ENCODE measurements at regions of chr16 and their contacts with region 1.

Region 1: DNA sequence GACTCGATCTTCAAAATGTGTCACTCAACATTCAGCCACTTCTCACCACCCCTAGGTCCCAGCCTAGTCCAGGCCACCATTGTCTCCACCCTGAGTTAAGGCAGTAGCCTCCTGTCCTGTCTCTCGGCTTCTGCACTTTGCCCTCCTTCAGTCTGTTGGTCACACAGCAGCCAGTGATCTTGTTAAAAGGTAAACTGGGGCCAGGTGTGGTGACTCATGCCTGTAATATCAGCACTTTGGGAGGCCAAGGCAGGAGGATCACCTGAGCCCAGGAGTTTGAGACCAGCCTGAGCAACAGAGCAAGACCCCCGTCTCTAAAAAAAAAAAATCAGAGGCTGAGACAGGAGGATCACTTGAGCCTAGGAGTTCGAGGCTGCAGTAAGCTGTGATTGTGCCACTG is 25.8 kb downstream of the WWP2 start:
- DNase-seq: no peak
- ATAC-seq: no peak
- H3K4me3 ChIP-seq: no peak overlapping the region
- H3K27ac ChIP-seq: no peak overlapping the region
- H3K4me1 ChIP-seq: no peaks in the 10 kb centered on the region
- H3K27me3 ChIP-seq: no peaks in the 10 kb centered on the region
- CTCF ChIP-seq: no peak
- EP300 ChIP-seq: no peak
- POLR2A ChIP-seq: no peak
- RAD21 ChIP-seq: no peak

Region 2: GRCh38 chr16:69626256-69626655 is 161.6 kb before region 1 on chr16:
- CTCF ChIA-PET with region 1: no interaction called
- POLR2A ChIA-PET with region 1: no interaction called
- RAD21 ChIA-PET with region 1: no interaction called
- SMC1A ChIA-PET with region 1: no interaction called
- in situ Hi-C with region 1: no loop called
- intact Hi-C with region 1: no loop called
- DNase-seq: no peak
- ATAC-seq: no peak
- H3K4me3 ChIP-seq: no peak overlapping the region
- H3K27ac ChIP-seq: no peak overlapping the region
- H3K4me1 ChIP-seq: no peaks in the 10 kb centered on the region
- H3K27me3 ChIP-seq: no peaks in the 10 kb centered on the region
- CTCF ChIP-seq: no peak
- EP300 ChIP-seq: no peak
- POLR2A ChIP-seq: no peak
- RAD21 ChIP-seq: no peak

Region 3: GRCh38 chr16:69709456-69710084 is 78.3 kb before region 1 on chr16:
- CTCF ChIA-PET with region 1: no interaction called
- POLR2A ChIA-PET with region 1: no interaction called
- RAD21 ChIA-PET with region 1: no interaction called
- SMC1A ChIA-PET with region 1: no interaction called
- in situ Hi-C with region 1: no loop called
- intact Hi-C with region 1: no loop called
- DNase-seq: peak; percentile 15
- ATAC-seq: peak; percentile 83
- H3K4me3 ChIP-seq: no peak overlapping the region
- H3K27ac ChIP-seq: no peak overlapping the region
- H3K4me1 ChIP-seq: no peaks in the 10 kb centered on the region
- H3K27me3 ChIP-seq: no peaks in the 10 kb centered on the region
- CTCF ChIP-seq: peak; percentile 43 to 74 (median 64); a peak in 5 of 6 replicates
- EP300 ChIP-seq: no peak
- POLR2A ChIP-seq: no peak
- RAD21 ChIP-seq: peak; percentile 73

Region 4: GRCh38 chr16:69732101-69732500 is 55.8 kb before region 1 on chr16:
- CTCF ChIA-PET with region 1: no interaction called
- POLR2A ChIA-PET with region 1: no interaction called
- RAD21 ChIA-PET with region 1: no interaction called
- SMC1A ChIA-PET with region 1: no interaction called
- in situ Hi-C with region 1: no loop called
- intact Hi-C with region 1: no loop called
- DNase-seq: no peak
- ATAC-seq: no peak
- H3K4me3 ChIP-seq: no peak overlapping the region
- H3K27ac ChIP-seq: no peak overlapping the region
- H3K4me1 ChIP-seq: no peaks in the 10 kb centered on the region; the same call in 1 of the 2 replicates
- H3K27me3 ChIP-seq: no peaks in the 10 kb centered on the region
- CTCF ChIP-seq: no peak
- EP300 ChIP-seq: no peak
- POLR2A ChIP-seq: no peak
- RAD21 ChIP-seq: no peak

Region 5: GRCh38 chr16:69924777-69925191 is 136.9 kb after region 1 on chr16:
- CTCF ChIA-PET with region 1: interaction called, 25 read pairs
- POLR2A ChIA-PET with region 1: no interaction called
- RAD21 ChIA-PET with region 1: no interaction called
- SMC1A ChIA-PET with region 1: no interaction called
- in situ Hi-C with region 1: loop called (anchors 5 kb)
- intact Hi-C with region 1: no loop called
- DNase-seq: no peak
- ATAC-seq: no peak
- H3K4me3 ChIP-seq: no peak overlapping the region
- H3K27ac ChIP-seq: no peak overlapping the region
- H3K4me1 ChIP-seq: no peaks in the 10 kb centered on the region
- H3K27me3 ChIP-seq: no peaks in the 10 kb centered on the region
- CTCF ChIP-seq: no peak
- EP300 ChIP-seq: no peak
- POLR2A ChIP-seq: no peak
- RAD21 ChIP-seq: no peak

Measured in GM12878 (cell line).